Activated T-helper 1 cell treated with anti-CD3 and anti-CD28 coated beads, Interleukin-12 subunit alpha, Interleukin-12 subunit beta, Interleukin-2, Interleukin-4 antibody, amounts not matched to agents 30 ng/mL and 10 ng/mL and 1 ng/mL, durations not matched to agents 14 hours and 24 hours and 36 hours (primary cell): ENCODE measurements at regions of chr1 and their contacts with region 1.

Region 1: DNA sequence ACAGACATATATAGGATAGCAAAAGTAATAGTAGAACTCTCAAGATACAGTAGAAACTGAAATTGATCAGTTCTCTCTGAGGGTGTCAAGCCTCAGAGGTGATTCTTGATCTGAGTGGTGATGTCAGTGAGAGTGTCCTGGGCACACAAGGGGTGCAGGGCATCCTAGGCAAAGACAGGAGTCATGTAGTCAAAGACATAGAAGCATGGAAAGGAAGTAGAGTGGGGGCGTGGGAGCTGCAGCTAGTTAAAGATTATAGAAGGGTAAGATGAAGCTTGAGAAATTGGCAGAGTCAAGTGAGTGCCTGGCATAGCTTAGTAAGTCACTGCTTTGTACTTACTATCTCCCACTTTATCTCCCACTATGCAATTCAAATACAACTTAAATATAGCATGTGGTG is 22.8 kb downstream of the CDC7 start:
- DNase-seq: no peak
- H3K4me3 Mint-ChIP-seq: no peak overlapping the region
- H3K27ac Mint-ChIP-seq: peak overlapping the region; percentile 33
- H3K4me1 Mint-ChIP-seq: peaks cover 41% of the 10 kb centered on the region
- H3K27me3 Mint-ChIP-seq: no peaks in the 10 kb centered on the region

Region 2: GRCh38 chr1:91278754-91279153 is 244.7 kb before region 1 on chr1:
- intact Hi-C with region 1: no loop called
- DNase-seq: no peak
- H3K4me3 Mint-ChIP-seq: no peak overlapping the region
- H3K27ac Mint-ChIP-seq: no peak overlapping the region
- H3K4me1 Mint-ChIP-seq: no peaks in the 10 kb centered on the region
- H3K27me3 Mint-ChIP-seq: peaks cover 16% of the 10 kb centered on the region

Region 3: DNA sequence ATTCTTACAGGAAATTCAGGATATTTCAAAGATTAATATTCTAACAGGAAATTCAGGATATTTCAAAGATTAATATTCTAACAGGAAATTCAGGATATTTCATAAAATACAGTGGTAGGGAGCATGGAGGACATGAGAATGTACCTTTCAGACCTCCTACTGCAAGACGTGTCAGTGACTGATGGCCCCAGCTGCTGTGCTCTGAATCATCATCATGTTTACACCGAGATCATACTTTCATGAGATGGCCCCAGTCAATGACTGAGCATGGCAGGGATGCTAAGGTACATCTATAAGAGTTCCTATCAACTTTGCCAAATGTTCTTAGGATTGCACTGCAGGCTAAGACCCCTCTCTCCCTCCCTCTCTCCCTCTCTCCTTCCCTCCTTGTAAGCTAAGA is 187.9 kb before region 1 on chr1:
- intact Hi-C with region 1: no loop called
- DNase-seq: no peak
- H3K4me3 Mint-ChIP-seq: no peak overlapping the region
- H3K27ac Mint-ChIP-seq: no peak overlapping the region
- H3K4me1 Mint-ChIP-seq: no peaks in the 10 kb centered on the region
- H3K27me3 Mint-ChIP-seq: peaks cover under 1% of the 10 kb centered on the region

Region 4: DNA sequence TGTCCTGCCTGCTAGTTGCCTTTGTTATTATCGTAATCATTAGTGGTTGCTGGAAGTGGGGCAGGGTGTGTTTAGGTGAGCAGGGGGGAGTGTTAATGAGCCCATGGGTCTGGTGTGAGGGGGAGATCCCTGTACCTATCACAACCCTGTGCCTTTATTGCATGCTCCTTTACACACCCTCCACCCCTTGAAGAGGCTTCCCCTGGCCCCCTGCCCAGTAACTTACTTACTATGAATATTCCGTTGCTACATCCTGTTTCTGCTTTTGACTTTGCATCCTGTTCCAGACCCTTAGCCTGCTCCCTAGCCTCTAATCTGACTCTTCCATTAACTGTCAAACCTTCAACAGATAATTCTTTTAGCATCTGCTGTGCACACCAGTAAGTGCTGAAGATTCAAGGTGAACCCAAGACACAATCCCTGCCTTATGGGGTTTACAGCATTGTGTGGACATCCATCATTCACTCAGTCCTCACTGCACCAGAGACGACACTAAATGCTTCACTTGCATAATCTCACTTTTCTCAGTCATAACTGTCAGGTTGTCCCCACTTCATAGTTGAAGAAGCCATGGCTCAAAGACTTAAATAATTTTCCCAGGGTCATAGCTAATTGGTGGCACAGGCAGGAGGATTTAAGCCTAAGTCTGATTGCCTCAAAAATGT is 25.0 kb after region 1 on chr1:
- intact Hi-C with region 1: loop called (anchors 2 kb)
- DNase-seq: no peak
- H3K4me3 Mint-ChIP-seq: peak overlapping the region; percentile 61
- H3K27ac Mint-ChIP-seq: peak overlapping the region; percentile 82
- H3K4me1 Mint-ChIP-seq: peaks cover 74% of the 10 kb centered on the region
- H3K27me3 Mint-ChIP-seq: no peaks in the 10 kb centered on the region

Region 5: DNA sequence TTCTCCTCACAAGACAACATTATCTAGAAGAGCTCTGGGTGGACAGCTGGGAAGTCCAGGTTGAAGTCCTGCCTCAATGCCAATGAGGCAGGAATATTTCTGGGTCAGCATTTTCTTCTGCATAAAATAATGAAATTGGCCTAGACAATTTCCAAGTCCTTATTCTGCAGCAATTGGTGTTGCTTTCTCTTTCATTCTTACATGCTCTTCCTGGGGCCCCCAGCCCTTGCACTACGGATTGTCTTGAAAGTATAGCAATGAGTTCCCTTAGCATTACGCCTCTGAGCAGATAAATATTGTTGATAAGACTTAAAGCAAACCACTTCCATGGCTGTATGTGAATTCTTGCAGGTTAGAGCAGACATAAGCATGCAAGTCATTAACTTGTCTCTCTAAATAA is 173.9 kb after region 1 on chr1:
- intact Hi-C with region 1: loop called (anchors 5 kb)
- DNase-seq: peak; percentile 69
- H3K4me3 Mint-ChIP-seq: peak overlapping the region; percentile 72
- H3K27ac Mint-ChIP-seq: peak overlapping the region; percentile 86
- H3K4me1 Mint-ChIP-seq: peaks cover 41% of the 10 kb centered on the region
- H3K27me3 Mint-ChIP-seq: peaks cover 1% of the 10 kb centered on the region